ENCODE measurements at regions of chr4 and their contacts with region 1.

Region 1: GRCh38 chr4:108018040-108018883 is 28.6 kb downstream of the HADH start:
- DNase-seq: peak; percentile 36
- ATAC-seq: peak; percentile 87
- H3K4me3 ChIP-seq: no peak overlapping the region
- H3K27ac ChIP-seq: no peak overlapping the region
- H3K4me1 ChIP-seq: no peaks in the 10 kb centered on the region
- H3K27me3 ChIP-seq: no peaks in the 10 kb centered on the region
- CTCF ChIP-seq: peak; percentile 90

Region 2: GRCh38 chr4:107989537-107990386 is 28.5 kb before region 1 on chr4 and contains the start of gene HADH:
- CTCF ChIA-PET with region 1: interaction called, 12 read pairs
- POLR2A ChIA-PET with region 1: no interaction called
- in situ Hi-C with region 1: no loop called
- intact Hi-C with region 1: no loop called
- DNase-seq: peak; percentile 18
- ATAC-seq: peak; percentile 100
- H3K4me3 ChIP-seq: peak within 1 kb of the TSS; percentile 74 to 85
- H3K27ac ChIP-seq: peak within 1 kb of the TSS; percentile 78
- H3K4me1 ChIP-seq: peaks cover 2% of the 10 kb centered on the region
- H3K27me3 ChIP-seq: no peaks in the 10 kb centered on the region
- CTCF ChIP-seq: no peak
- total RNA-seq, gene HADH: 20.0 TPM

Region 3: GRCh38 chr4:108570993-108571569 is 552.8 kb after region 1 on chr4:
- CTCF ChIA-PET with region 1: interaction called, 4 read pairs
- POLR2A ChIA-PET with region 1: no interaction called
- in situ Hi-C with region 1: no loop called
- intact Hi-C with region 1: loop called (anchors 5 kb)
- DNase-seq: no peak
- ATAC-seq: no peak
- H3K4me3 ChIP-seq: no peak overlapping the region
- H3K27ac ChIP-seq: no peak overlapping the region
- H3K4me1 ChIP-seq: no peaks in the 10 kb centered on the region
- H3K27me3 ChIP-seq: peaks cover 4% of the 10 kb centered on the region; the same call in 1 of the 2 replicates
- CTCF ChIP-seq: no peak